Naive thymus-derived CD4-positive, alpha-beta T cell (primary cell): ENCODE measurements at regions of chr1 and their contacts with region 1.

Region 1: DNA sequence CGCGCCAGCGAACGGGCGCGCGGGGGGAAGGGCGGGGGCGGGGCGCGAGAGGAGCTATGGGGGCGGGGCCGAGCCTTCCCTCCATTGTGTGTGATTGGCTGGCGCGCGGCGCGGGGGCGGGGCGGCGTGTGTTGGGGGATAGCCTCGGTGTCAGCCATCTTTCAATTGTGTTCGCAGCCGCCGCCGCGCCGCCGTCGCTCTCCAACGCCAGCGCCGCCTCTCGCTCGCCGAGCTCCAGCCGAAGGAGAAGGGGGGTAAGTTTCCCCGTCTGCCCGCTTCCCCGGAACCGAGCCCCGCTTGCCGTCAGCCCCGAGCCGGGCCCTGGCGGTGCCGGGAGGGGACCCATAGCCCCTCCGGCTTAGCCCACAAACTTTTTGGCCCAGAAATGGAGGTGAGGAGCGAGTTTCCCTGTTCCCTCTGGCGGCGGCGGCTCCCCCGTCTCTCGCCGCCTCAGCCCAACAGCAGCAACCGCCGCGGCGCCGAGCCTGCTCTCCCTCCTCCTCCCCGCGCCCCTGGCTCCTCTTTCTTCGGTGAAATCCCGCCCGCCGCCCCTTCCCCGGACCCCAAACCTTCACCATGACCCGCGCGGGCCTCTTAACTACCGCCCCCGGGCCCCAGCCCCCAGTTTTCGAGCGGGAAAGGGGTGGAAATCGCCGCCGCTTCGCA is at the start of gene H3-3A:
- DNase-seq: peak; percentile 97 to 99 (median 98)
- ATAC-seq: peak; percentile 93
- H3K4me3 ChIP-seq: peak within 1 kb of the TSS; percentile 80
- H3K4me3 Mint-ChIP-seq: peak within 1 kb of the TSS; percentile 99 to 100 (median 100)
- H3K27ac ChIP-seq: peak within 1 kb of the TSS; percentile 97
- H3K27ac Mint-ChIP-seq: peak within 1 kb of the TSS; percentile 99 to 100 (median 100)
- H3K4me1 ChIP-seq: peaks cover 24 to 31% of the 10 kb centered on the region in 2 donors
- H3K4me1 Mint-ChIP-seq: peaks cover 34 to 63% (median 51%) of the 10 kb centered on the region in 7 donors
- H3K27me3 ChIP-seq: no peaks in the 10 kb centered on the region
- H3K27me3 Mint-ChIP-seq: no peaks in the 10 kb centered on the region
- total RNA-seq, gene H3-3A: 388 to 561 (median 412) TPM

Region 2: GRCh38 chr1:225777583-225778336 is 284.9 kb before region 1 on chr1 and contains the start of gene SRP9:
- CTCF ChIA-PET with region 1: no interaction called
- POLR2A ChIA-PET with region 1: interaction called, 20 read pairs
- intact Hi-C with region 1: loop called (anchors 1 to 2 kb)
- DNase-seq: peak; percentile 97 to 100 (median 99)
- ATAC-seq: peak; percentile 98
- H3K4me3 ChIP-seq: peak within 1 kb of the TSS; percentile 94
- H3K4me3 Mint-ChIP-seq: no peak within 1 kb of the TSS
- H3K27ac ChIP-seq: peak within 1 kb of the TSS; percentile 97
- H3K27ac Mint-ChIP-seq: no peak within 1 kb of the TSS
- H3K4me1 ChIP-seq: peaks cover 22 to 51% of the 10 kb centered on the region in 2 donors
- H3K4me1 Mint-ChIP-seq: peaks cover 17 to 54% (median 36%) of the 10 kb centered on the region in 7 donors
- H3K27me3 ChIP-seq: no peaks in the 10 kb centered on the region
- H3K27me3 Mint-ChIP-seq: no peaks in the 10 kb centered on the region
- total RNA-seq, gene SRP9: 76.1 to 193 (median 145) TPM

Region 3: DNA sequence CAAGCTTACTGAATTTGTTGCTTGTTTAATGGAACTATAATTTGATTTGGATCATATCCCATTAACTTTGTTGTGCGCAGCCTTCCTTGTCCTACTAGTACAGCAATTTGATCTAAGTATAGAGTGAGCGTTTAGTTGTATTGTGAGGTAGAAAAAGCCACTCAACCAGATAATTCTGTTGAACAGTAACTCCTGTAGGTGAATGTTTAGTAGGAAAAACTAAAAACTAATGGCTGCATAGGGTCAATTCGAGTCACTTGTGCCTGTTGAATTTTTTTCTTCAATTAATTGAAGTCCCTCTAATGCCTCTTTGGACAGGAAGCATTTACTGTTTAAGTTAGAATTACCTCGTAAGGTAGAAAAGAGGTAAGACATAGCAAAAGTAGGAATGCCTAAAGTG is 267.7 kb before region 1 on chr1:
- CTCF ChIA-PET with region 1: no interaction called
- POLR2A ChIA-PET with region 1: no interaction called
- intact Hi-C with region 1: no loop called
- DNase-seq: no peak
- ATAC-seq: no peak
- H3K4me3 ChIP-seq: no peak overlapping the region
- H3K4me3 Mint-ChIP-seq: no peak overlapping the region
- H3K27ac ChIP-seq: no peak overlapping the region
- H3K27ac Mint-ChIP-seq: no peak overlapping the region
- H3K4me1 ChIP-seq: no peaks in the 10 kb centered on the region
- H3K4me1 Mint-ChIP-seq: peaks cover 0 to 13% (median 0%) of the 10 kb centered on the region in 7 donors
- H3K27me3 ChIP-seq: no peaks in the 10 kb centered on the region
- H3K27me3 Mint-ChIP-seq: no peaks in the 10 kb centered on the region

Region 4: DNA sequence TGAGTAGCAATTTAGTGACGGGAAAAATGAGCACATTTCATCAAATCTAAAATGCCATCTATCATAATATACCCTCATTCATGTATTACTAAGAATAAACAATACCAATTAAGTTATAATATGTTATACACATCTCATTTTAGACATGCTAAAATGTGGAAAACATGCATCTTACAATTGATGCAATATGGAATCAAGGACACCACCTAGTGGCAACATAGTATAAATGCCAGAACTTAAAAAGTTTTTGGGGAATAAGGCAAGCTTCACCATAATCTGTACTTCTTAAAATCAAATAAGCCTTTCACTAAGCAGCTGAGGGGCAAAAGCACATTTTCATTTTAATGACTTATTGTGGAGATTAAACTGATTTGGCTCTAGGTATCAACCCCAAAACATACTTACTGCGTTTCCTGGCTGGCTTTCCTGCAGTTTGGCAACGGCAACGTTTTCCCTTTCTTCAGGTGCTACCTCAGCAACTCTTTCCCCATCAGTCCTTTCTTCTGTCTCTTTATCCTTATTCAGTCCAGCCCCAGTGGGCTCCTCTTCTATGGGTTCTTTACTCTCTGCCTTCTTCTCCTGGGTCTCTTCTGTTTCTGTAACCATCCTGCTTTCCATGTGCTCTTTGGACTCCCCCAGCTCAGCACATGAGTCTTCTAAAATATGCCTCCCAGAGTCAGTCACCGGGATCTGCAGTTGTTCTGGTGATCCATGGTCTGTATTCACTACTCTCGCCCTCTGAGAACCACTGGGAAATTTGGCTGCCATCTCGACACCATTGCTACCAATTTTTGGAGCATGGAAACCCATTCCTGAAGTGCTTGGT is 75.0 kb before region 1 on chr1:
- CTCF ChIA-PET with region 1: interaction called, 14 read pairs
- POLR2A ChIA-PET with region 1: interaction called, 52 read pairs
- intact Hi-C with region 1: loop called in 1 of 2 experiments (anchors 1 kb)
- DNase-seq: peak in 5 of 9 donors; percentile 41 to 54 (median 49)
- ATAC-seq: peak; percentile 80
- H3K4me3 ChIP-seq: no peak overlapping the region
- H3K4me3 Mint-ChIP-seq: peak overlapping the region in 1 of 10 donors; percentile 12
- H3K27ac ChIP-seq: no peak overlapping the region
- H3K27ac Mint-ChIP-seq: peak overlapping the region in 6 of 9 donors; percentile 1 to 55 (median 23)
- H3K4me1 ChIP-seq: peaks cover 0 to 10% of the 10 kb centered on the region in 2 donors
- H3K4me1 Mint-ChIP-seq: peaks cover 11 to 35% (median 24%) of the 10 kb centered on the region in 7 donors
- H3K27me3 ChIP-seq: no peaks in the 10 kb centered on the region
- H3K27me3 Mint-ChIP-seq: no peaks in the 10 kb centered on the region

Region 5: GRCh38 chr1:226109829-226110248 is 47.1 kb after region 1 on chr1:
- CTCF ChIA-PET with region 1: interaction called, 9 read pairs
- POLR2A ChIA-PET with region 1: interaction called, 26 read pairs
- intact Hi-C with region 1: loop called (anchors 1 kb)
- DNase-seq: peak; percentile 44 to 84 (median 59)
- ATAC-seq: peak; percentile 92
- H3K4me3 ChIP-seq: peak overlapping the region; percentile 59
- H3K4me3 Mint-ChIP-seq: peak overlapping the region; percentile 88 to 96 (median 92)
- H3K27ac ChIP-seq: peak overlapping the region; percentile 67
- H3K27ac Mint-ChIP-seq: peak overlapping the region; percentile 85 to 93 (median 89)
- H3K4me1 ChIP-seq: no peaks in the 10 kb centered on the region
- H3K4me1 Mint-ChIP-seq: peaks cover 7 to 26% (median 21%) of the 10 kb centered on the region in 7 donors
- H3K27me3 ChIP-seq: no peaks in the 10 kb centered on the region
- H3K27me3 Mint-ChIP-seq: peaks cover 0 to 6% (median 0%) of the 10 kb centered on the region in 5 donors

Region 6: DNA sequence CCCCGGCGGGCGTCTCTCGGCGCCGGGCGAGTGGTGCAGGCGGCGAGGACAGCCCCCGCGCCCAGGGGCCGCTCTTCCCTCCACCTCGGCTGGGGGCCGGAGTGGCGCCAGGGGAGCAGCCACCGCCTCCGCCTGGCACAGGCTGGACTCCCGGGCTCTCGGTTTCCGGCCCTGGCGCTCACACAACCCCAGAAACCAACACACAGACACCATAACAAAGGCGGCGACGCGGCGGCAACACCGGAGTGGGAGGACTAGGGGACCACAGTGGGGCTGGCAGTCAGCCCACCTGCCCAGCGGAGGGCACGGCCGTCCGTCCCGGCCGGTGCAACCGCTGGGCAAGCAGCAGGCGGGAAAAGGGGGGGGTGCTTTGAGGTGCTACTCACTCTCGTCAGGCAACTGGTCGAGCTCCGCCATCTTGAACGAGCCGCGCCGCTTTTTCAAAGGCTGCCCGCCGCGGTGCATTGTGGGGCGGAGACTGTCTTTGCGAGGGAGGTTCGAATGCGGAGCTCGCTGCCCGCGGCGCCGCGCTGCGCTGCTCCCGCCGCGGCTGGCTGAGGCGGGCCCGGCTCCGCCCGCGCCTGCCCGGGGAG is 246.1 kb after region 1 on chr1 and contains the start of gene LIN9:
- CTCF ChIA-PET with region 1: no interaction called
- POLR2A ChIA-PET with region 1: interaction called, 3 read pairs
- intact Hi-C with region 1: loop called (anchors 5 to 10 kb)
- DNase-seq: peak; percentile 83 to 94 (median 88)
- ATAC-seq: peak; percentile 97
- H3K4me3 ChIP-seq: peak within 1 kb of the TSS; percentile 99
- H3K4me3 Mint-ChIP-seq: peak within 1 kb of the TSS; percentile 88 to 95 (median 92)
- H3K27ac ChIP-seq: peak within 1 kb of the TSS; percentile 76
- H3K27ac Mint-ChIP-seq: peak within 1 kb of the TSS; percentile 34 to 97 (median 85)
- H3K4me1 ChIP-seq: peaks cover 5% of the 10 kb centered on the region in 2 donors
- H3K4me1 Mint-ChIP-seq: peaks cover 14 to 37% (median 22%) of the 10 kb centered on the region in 7 donors
- H3K27me3 ChIP-seq: peaks cover 0 to 4% of the 10 kb centered on the region in 2 donors
- H3K27me3 Mint-ChIP-seq: peaks cover 5 to 19% (median 14%) of the 10 kb centered on the region in 5 donors
- total RNA-seq, gene LIN9: 2.0 to 8.0 (median 5.0) TPM